PC-3 (cell line): ENCODE measurements at regions of chr1 and their contacts with region 1.

Region 1: DNA sequence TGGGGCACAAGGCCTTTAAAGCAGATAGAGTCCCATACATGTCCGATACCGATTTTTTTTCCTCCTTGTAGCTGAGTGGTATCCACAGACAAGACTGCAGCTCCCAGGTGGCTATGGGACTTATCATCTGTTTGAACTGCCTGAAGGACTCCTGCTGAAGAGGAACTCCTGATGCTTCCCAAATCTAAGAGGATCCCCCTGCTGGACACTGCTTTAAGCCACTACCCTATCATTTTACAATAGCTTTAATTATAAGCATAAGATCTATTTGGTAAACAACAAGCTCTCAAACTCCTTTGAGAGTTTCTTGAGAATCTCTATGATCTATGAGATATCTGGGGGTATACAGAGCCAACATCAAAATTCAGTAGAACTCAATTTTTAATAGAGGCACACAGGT is 11.7 kb downstream of the NDC1 start:
- DNase-seq: no peak
- ATAC-seq: peak; percentile 61
- H3K4me3 ChIP-seq: no peak overlapping the region
- H3K27ac ChIP-seq: no peak overlapping the region
- H3K4me1 ChIP-seq: no peaks in the 10 kb centered on the region
- H3K27me3 ChIP-seq: no peaks in the 10 kb centered on the region
- CTCF ChIP-seq: peak; percentile 53

Region 2: DNA sequence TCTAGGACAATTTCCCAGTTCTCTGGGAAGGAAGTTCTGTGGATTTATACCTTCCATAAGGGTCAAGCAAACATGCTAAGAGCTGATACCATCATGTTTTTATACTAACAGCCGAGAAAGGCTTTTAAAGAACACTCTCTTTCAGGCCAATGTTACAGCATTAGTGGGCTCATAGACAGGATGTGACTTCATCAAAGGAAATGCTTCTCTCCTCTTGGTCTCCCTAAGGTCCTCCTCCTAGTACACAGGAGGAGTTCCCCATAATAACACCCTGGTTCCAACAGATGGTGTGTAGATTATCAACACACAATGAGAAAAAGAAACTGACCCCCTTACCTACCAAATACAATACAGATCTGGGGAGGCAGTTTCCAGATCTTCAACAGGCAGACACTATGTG is 60.7 kb before region 1 on chr1:
- CTCF ChIA-PET with region 1: no interaction called
- POLR2A ChIA-PET with region 1: no interaction called
- intact Hi-C with region 1: loop called (anchors 5 kb)
- DNase-seq: no peak
- ATAC-seq: no peak
- H3K4me3 ChIP-seq: no peak overlapping the region
- H3K27ac ChIP-seq: no peak overlapping the region
- H3K4me1 ChIP-seq: no peaks in the 10 kb centered on the region
- H3K27me3 ChIP-seq: no peaks in the 10 kb centered on the region
- CTCF ChIP-seq: no peak

Region 3: GRCh38 chr1:53896635-53897229 is 70.4 kb after region 1 on chr1:
- CTCF ChIA-PET with region 1: no interaction called
- POLR2A ChIA-PET with region 1: no interaction called
- intact Hi-C with region 1: no loop called
- DNase-seq: peak; percentile 80
- ATAC-seq: peak; percentile 78
- H3K4me3 ChIP-seq: no peak overlapping the region
- H3K27ac ChIP-seq: peak overlapping the region; percentile 55
- H3K4me1 ChIP-seq: peaks cover 28% of the 10 kb centered on the region
- H3K27me3 ChIP-seq: no peaks in the 10 kb centered on the region
- CTCF ChIP-seq: no peak